ENCODE measurements at regions of chr3 and their contacts with region 1.

Region 1: DNA sequence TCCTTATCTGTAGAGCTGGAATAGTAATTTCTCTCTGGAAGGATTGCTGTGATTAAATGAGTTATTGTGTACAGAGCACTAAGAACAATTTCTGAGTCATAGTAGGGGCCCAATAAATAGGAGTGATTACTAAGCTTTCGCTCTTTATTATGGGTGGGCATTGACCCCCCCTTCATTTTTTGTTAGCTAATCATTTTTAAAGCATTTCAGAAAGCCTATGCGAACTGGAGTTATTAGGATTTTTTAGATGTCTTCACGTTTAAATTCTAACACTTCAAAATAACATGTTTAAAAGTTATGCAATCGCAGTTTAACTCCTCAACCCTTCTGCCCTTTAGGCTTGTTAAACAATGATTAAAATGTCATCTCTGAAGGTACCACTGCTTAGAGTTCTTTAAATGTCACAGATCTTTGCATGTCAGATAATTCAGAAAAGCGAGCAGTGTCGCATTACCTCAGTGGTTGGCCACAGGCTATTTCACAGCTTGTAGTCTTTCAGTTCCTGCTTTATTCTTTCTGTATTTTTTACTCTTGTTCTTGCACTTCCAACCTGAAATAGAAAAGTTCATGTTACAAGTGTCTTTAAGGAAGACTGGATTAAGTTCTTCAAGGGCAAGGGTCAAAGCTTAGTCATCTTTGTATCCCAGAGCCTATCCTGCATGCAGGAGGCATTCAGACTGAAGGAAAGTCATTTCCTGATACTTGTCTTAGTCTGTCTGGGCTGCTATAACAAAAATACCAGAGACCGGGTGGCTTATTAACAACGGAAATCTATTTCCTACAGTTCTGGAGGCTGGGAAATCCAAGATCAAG is 102.9 kb downstream of the FNDC3B start:
- DNase-seq: no peak
- H3K4me3 ChIP-seq: no peak overlapping the region
- CTCF ChIP-seq: no peak

Region 2: GRCh38 chr3:172239218-172239790 is 97.0 kb after region 1 on chr3:
- in situ Hi-C with region 1: loop called (anchors 5 kb)
- DNase-seq: no peak
- H3K4me3 ChIP-seq: no peak overlapping the region
- CTCF ChIP-seq: no peak

Measured in astrocyte of the cerebellum (primary cell).